Caco-2 (cell line): ENCODE measurements at regions of chr2 and their contacts with region 1.

Region 1: DNA sequence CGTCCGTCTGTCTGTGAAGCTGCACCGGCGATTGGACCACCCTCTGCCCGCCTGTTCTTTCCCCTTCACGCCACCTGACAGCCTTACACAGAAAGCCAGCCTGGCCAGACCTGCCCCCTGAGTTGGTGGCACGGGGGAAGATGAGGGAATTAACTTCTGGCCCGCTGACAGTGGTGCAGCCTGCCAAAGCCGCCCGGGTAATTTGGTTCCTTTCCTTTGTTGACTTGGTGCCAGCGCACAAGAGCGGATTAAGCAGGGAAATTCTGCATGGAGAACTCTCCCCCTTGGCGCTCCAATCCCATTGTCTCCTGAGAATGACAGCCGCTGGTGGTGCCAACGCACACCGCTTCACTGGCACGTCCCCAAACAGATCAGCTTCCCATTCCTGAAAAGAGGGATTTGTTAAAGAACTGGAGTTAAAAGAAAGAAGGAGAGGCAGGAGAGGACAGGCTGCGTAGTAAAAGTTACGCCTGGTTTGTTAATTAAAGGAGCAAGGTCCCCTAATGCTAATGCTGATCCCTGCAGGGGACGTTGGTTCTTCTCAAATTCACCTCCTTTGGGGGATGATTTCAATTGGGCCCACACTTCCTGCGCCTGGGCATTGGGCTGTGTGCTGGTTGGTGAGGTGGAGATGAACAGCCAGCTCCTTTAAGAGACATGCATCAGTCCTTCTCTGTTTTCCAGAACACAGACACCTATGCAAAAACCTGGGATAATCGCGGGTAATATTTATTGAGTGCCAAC is 286.7 kb downstream of the MYCN start:
- DNase-seq: no peak
- H3K4me3 ChIP-seq: no peak overlapping the region
- H3K4me3 Mint-ChIP-seq: no peak overlapping the region
- H3K27ac Mint-ChIP-seq: no peak overlapping the region
- H3K4me1 ChIP-seq: peaks cover 16% of the 10 kb centered on the region; the same call in 1 of the 2 replicates
- H3K4me1 Mint-ChIP-seq: no peaks in the 10 kb centered on the region
- H3K27me3 ChIP-seq: no peaks in the 10 kb centered on the region
- H3K27me3 Mint-ChIP-seq: no peaks in the 10 kb centered on the region
- CTCF ChIP-seq: no peak

Region 2: DNA sequence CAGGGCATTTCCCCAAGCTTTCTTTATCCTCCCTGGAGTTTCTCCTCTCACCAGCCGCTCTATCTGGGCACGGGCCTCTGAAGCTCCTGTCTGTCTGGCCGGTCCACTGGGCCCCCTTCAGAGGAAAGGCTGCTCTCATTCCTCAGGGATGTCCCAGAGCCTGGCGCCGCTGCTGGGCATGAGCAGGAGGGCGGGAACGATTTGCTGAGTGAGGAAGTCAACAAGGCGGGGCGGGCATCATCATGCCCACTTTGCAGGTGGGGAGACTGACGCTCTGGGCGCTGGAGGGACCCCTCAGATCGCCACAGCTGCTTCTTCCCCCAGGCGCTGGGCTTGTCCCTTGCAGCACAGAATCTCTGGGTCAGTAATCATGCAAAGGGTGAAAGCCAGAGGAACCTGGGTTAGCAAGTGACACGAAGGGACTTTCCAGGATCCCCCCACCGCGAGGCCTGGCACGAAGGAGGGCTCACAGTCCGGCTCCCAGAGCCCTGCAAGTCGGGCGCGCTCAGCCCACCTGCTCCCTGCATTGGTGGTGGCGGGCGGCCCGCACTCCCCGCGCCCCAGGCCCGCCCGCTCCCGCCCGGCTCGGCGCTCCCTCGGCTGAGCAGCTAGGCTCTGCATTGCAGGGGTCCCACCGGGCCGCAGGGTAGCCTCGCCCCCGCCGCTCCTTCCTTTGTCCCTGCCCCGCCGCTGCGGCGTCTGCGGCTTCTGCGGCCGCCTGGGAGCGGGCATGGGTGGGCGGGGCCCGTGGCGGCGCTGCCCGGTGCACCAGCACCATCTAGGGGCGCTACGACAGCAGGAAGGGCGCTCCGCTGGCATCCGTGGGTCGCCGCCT is 280.8 kb after region 1 on chr2:
- CTCF ChIA-PET with region 1: no interaction called
- POLR2A ChIA-PET with region 1: no interaction called
- intact Hi-C with region 1: loop called (anchors 5 kb)
- DNase-seq: peak; percentile 66 to 82
- H3K4me3 ChIP-seq: peak overlapping the region; percentile 26
- H3K4me3 Mint-ChIP-seq: peak overlapping the region; percentile 61
- H3K27ac Mint-ChIP-seq: peak overlapping the region; percentile 37
- H3K4me1 ChIP-seq: peaks cover 36% of the 10 kb centered on the region
- H3K4me1 Mint-ChIP-seq: peaks cover 12% of the 10 kb centered on the region
- H3K27me3 ChIP-seq: no peaks in the 10 kb centered on the region
- H3K27me3 Mint-ChIP-seq: no peaks in the 10 kb centered on the region
- CTCF ChIP-seq: peak; percentile 83 to 91